Lower leg skin (tissue), 4 donors: ENCODE measurements at regions of chr10 and their contacts with region 1.

Region 1: DNA sequence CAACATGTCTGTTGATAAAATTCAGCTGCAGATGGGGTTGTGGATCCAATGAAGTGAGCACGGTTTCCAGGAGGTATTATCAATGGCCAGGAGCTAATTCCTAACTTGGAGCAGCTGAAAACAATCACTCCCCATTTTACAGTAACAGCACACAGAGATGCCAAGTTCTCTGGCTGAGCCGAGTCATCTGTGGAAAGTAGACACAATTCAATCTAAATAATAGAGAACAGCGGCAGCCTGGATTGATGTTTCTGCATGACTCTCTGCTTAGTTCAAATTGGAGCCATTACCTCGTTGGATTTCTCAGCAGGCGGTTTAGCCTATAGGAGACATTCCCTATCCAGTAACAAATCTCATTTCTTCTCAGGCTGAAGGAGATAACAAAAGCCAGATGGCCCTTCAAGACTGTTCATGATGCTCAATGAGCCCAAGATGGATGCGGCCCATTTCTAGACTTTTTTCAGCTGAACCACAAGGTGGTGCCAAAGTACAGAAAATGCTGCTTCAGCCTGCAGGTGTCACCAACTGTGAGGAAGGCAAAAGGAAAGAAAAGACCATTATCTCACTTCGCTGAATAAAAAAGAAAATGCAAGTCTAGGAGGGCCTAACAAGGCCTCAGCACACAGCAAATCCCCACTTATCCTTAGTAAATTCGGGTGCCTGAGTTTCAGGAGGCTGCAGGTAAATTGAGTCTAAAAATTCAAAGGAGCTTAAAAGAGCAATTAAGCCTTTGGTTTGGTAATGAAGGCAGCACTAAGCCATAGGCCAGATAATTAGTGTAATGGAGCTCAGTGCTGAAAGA is 83.7 kb downstream of the SLC16A9 start:
- DNase-seq: no peak
- H3K4me3 ChIP-seq: no peak overlapping the region
- CTCF ChIP-seq: peak in 1 of 3 donors; percentile 74
- POLR2A ChIP-seq: no peak

Region 2: DNA sequence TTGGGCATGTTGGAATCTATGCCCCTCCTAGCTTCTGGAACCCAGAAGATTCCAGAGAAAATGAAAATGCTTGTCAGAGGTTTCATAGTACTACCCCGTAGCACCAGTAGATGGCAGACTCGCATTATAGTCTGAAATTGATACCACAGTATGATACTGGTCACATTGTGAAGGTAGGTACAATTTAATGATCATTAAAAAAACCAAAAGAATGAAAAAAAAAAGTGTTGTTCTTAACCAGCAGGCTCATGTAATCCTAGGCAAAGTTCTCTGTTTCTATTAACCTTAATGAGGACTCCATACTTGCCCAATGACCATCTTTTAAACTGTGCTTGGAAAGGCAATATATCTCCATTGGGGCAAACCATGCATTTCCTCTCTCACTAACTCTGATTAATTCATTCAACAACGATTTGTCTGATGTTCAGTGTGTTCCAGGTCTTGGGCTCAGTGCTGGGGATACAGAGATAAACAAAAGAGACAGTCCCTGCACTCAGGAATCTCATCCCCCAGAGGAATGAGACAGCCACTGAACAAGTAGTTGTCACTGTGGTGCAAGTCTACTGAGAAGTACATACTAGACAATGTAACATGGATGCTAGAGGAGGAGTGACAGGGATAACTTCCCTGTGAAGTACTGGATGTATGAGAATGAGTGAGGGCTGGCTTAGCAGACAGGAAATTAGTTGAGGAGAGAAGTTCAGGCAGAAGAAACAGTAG is 673.0 kb before region 1 on chr10:
- intact Hi-C with region 1: loop called (anchors 10 kb)
- DNase-seq: peak in 1 of 2 donors; percentile 54
- H3K4me3 ChIP-seq: no peak overlapping the region
- CTCF ChIP-seq: peak in 1 of 3 donors; percentile 83
- POLR2A ChIP-seq: no peak

Region 3: DNA sequence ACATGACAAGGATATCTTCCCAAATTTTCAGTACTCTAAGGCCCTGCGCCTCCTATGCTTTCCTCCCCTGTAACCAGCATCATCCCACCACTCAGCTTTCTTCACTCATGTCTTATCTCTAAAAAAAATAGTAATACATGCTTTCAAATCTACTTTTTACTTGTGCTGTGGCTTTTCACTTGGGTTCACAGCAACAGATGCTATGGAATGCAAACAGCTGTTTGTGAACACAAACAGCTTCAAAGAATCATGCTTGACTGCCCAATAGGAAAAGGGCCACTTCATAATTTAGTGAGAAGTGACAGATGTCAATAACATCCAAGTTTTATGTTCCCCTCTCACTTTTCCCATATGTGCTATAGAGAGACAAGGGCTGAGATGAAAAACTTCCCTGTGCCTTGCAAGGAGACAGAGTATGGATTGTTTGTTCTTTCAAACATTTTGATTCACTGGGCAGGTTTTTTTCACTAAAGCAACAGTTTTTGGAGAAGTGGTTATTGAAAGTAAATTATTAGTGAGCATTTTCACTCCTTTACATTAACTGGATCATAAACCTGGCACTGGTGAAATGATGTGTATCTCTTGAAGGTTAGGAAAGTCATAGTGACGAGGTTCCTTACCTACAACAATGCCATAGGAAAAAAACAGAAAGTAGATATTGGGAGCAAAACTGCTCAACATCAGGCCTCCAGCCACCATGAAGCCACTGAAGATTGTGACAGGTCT is 46.4 kb after region 1 on chr10:
- intact Hi-C with region 1: loop called (anchors 1 kb)
- DNase-seq: no peak
- H3K4me3 ChIP-seq: no peak overlapping the region
- CTCF ChIP-seq: no peak
- POLR2A ChIP-seq: no peak

Region 4: DNA sequence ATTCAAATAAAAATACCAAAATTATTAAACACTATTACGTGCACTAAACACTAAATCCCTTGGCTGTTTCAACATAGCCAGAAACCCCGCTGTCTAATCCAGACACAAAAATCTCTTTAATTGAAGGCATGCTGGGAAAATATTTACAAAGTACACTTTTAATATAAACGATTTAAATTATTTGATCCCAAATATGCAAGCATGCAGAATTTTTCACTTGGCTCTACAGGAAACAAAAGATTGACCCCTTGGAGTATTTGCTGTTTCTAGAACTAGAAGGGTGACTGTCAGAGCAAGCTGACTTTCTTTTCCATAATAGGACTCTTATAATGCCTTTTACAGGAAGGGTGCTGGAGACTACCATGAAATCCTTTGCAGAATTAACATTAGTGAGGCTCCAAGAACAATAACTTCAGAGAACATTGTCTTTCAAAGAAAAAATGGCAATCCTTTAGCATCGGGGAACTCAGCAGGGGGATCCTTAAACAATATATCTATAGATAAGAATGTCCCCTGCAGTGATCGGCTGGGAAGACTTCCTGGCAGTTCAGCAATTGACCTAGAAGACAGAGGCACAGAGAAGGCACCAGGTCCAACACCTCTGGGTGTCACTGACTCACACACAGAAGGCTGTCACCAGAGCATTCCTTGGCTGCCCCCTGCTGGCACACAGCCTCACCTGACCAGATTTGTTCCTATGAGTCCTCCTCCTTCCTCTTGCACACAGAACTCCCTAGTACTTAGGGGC is 183.1 kb after region 1 on chr10:
- intact Hi-C with region 1: loop called (anchors 10 kb)
- DNase-seq: peak; percentile 41 to 91
- H3K4me3 ChIP-seq: no peak overlapping the region
- CTCF ChIP-seq: no peak
- POLR2A ChIP-seq: no peak

Region 5: GRCh38 chr10:59872892-59873463 is 247.1 kb after region 1 on chr10:
- intact Hi-C with region 1: no loop called
- DNase-seq: peak in 1 of 2 donors; percentile 85
- H3K4me3 ChIP-seq: no peak overlapping the region
- CTCF ChIP-seq: no peak
- POLR2A ChIP-seq: no peak